BJ (cell line): ENCODE measurements at regions of chr2 and their contacts with region 1.

Region 1: GRCh38 chr2:45024600-45025291 is 15.5 kb upstream of the SIX2 start:
- DNase-seq: peak; percentile 76
- H3K4me3 ChIP-seq: no peak overlapping the region
- H3K27me3 ChIP-seq: peaks cover 7% of the 10 kb centered on the region
- CTCF ChIP-seq: no peak

Region 2: GRCh38 chr2:45043174-45043573 is 18.4 kb after region 1 on chr2:
- CTCF ChIA-PET with region 1: no interaction called
- POLR2A ChIA-PET with region 1: no interaction called
- DNase-seq: no peak
- H3K4me3 ChIP-seq: no peak overlapping the region
- H3K27me3 ChIP-seq: peaks cover 20% of the 10 kb centered on the region
- CTCF ChIP-seq: no peak

Region 3: GRCh38 chr2:45105050-45105582 is 80.4 kb after region 1 on chr2:
- CTCF ChIA-PET with region 1: no interaction called
- POLR2A ChIA-PET with region 1: no interaction called
- DNase-seq: no peak
- H3K4me3 ChIP-seq: no peak overlapping the region
- H3K27me3 ChIP-seq: peaks cover 5% of the 10 kb centered on the region
- CTCF ChIP-seq: no peak

Region 4: DNA sequence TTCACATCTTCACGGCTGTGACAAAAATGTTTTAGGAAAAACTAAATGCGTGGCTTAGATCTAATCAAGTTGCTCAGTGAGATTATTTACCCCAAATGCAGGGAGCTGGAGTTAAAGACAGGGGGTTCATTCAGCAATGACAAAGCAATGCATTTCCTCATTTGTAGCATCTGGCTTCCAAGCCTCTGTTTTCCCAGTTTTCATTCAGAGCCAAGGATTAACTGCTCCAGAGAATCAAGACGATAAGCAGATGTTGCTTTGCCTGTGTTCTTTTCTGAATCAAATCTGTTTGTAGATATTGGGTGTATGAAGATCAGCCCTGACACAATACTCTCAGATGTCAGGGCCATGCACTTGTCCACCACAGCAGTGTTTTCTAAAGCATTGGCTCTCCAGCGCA is 131.9 kb after region 1 on chr2:
- CTCF ChIA-PET with region 1: no interaction called
- POLR2A ChIA-PET with region 1: interaction called, 14 read pairs
- DNase-seq: no peak
- H3K4me3 ChIP-seq: no peak overlapping the region
- H3K27me3 ChIP-seq: peaks cover 20% of the 10 kb centered on the region
- CTCF ChIP-seq: no peak

Region 5: DNA sequence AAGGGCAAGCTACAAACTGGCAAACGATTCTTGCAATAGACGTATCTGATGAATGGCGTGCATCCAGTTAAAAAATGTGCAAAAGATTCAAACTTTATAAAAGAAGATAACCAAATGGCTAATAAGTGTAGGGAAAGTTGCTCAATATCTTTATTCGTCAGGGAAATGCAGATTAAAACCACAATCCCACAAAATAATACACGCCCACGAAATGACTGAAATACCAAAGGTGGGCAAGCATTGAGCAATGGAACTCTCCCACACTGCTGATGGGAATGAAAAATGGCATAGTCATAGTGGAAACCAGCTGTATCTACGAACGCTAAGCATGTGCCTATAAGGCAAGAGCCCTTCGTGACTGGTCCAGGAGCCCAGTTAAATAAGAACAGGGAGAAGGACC is 153.1 kb after region 1 on chr2:
- CTCF ChIA-PET with region 1: no interaction called
- POLR2A ChIA-PET with region 1: interaction called, 21 read pairs
- DNase-seq: peak; percentile 97
- H3K4me3 ChIP-seq: no peak overlapping the region
- H3K27me3 ChIP-seq: no peaks in the 10 kb centered on the region
- CTCF ChIP-seq: no peak